ENCODE measurements at regions of chr7 and their contacts with region 1.

Region 1: DNA sequence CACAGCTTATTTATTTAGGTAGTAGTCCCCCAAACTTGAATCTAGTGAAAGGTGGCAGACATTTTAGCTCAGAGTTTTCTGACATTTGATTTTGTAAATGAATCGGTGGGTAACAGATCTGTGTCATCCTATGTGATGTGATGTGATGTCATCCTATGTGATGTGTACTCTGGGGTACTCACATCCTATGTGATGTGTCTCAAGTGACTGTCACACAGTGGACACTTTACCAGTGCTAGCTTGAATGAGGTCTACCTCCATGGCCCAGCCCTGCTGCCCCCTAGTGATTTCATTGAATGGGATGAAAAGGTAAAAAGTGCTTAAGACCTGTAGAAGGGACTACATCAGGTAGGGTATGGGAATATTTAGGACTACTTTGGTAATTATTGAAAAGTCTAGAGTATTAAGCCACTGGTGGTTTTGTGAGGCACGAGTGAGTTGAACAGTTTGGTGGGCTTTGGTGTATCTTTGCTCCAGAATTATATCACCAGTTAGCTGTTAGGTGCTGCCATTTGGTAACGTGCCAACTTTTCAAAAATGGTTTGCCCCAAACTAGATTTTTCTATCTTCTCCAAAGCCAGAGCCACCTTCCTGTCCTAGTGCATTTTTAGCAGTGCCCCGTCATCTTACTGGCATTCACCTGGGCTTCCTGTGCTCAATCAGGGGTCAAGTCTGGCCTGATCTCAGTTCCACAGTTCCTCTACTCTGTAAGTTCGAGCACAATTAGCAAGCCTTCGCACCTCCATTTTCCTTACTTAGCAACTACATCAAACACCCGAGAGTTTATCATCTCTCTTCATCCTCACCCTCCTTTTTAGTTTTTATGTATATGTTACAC is 9.7 kb downstream of the EIF4H start:
- DNase-seq: no peak

Region 2: GRCh38 chr7:74535951-74536356 is 352.1 kb after region 1 on chr7:
- intact Hi-C with region 1: no loop called
- DNase-seq: no peak

Region 3: GRCh38 chr7:75827638-75828037 is 1643.8 kb after region 1 on chr7:
- intact Hi-C with region 1: loop called in 1 of 2 experiments (anchors 5 kb)
- DNase-seq: no peak

Measured in posterior vena cava (tissue), 2 donors.